ENCODE measurements at regions of chr7 and their contacts with region 1.

Region 1: DNA sequence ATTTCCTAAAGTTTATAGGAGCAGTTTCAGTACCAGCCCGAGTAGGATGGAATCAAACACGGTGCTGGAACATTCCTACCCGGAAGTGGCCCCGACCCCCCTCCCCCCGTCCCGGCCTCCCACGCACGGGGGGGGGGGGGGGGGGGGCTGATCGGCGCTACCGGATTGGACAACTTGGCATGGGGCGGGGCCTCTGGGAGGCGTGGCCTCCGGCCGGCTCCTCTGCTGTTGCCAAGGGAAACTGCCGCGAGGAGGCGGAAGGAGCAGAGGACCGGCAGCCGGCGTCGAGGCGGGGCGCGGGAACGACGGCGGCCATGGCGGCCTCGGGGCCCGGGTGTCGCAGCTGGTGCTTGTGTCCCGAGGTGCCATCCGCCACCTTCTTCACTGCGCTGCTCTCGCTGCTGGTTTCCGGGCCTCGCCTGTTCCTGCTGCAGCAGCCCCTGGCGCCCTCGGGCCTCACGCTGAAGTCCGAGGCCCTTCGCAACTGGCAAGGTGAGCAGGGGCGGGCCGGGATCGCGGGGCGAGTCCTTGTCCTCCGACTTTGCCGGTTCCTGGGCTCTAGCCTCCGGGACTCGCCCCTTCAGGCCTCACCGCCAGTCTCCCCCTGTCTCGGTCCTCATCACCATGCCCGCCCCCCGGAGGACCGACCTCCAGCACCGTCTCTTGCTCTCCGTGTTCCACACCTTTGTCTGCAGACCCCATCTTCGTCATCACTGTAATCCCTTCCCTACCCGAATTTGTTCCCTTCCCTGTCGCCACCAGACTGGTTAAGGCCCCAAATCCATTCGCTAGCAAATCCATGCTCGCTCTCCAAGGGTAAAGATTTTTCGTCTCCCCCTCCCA is at the start of gene RHBDD2:
- DNase-seq: peak; percentile 89
- H3K4me3 Mint-ChIP-seq: peak within 1 kb of the TSS; percentile 100
- H3K27ac Mint-ChIP-seq: peak within 1 kb of the TSS; percentile 99
- H3K4me1 Mint-ChIP-seq: peaks cover 39% of the 10 kb centered on the region
- H3K27me3 Mint-ChIP-seq: no peaks in the 10 kb centered on the region
- total RNA-seq, gene RHBDD2: 139 and 143 TPM in 2 replicates

Region 2: GRCh38 chr7:75776295-75776971 is 102.6 kb before region 1 on chr7:
- intact Hi-C with region 1: loop called (anchors 2 kb)
- DNase-seq: peak; percentile 50
- H3K4me3 Mint-ChIP-seq: no peak overlapping the region
- H3K27ac Mint-ChIP-seq: peak overlapping the region; percentile 78
- H3K4me1 Mint-ChIP-seq: peaks cover 36% of the 10 kb centered on the region
- H3K27me3 Mint-ChIP-seq: peaks cover 7% of the 10 kb centered on the region

Region 3: DNA sequence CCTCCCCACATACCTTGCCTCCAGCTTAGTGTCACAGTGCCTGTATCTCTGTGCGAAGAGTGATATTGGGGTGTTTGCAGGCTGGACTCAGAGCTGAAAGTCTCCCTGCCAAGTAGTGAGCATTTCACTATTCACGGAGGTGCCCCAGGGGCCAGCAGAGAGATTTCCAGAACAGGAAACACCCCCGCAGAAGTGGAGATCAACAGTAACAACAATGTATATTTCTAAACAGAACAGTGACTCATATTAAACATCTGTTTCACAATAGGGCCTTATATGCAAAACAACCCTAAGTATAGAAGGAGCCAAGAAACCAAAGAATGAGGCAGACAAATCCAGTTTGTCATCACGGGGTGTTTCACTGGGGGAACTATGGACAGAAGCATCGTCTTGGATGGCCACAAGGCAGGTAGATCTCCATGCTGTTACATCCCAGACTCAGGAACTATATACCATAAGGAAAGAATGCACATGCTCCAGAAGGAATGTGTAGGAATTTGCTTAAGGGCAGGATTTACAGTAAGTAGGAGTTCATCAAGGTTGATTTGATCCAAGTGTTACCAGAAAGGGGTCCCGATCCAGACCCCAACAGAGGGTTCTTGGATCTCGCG is 36.0 kb before region 1 on chr7:
- intact Hi-C with region 1: loop called (anchors 5 kb)
- DNase-seq: no peak
- H3K4me3 Mint-ChIP-seq: peak overlapping the region; percentile 62
- H3K27ac Mint-ChIP-seq: peak overlapping the region; percentile 97
- H3K4me1 Mint-ChIP-seq: peaks cover 14% of the 10 kb centered on the region
- H3K27me3 Mint-ChIP-seq: no peaks in the 10 kb centered on the region

Region 4: GRCh38 chr7:75866489-75867389 is 12.3 kb before region 1 on chr7:
- intact Hi-C with region 1: loop called (anchors 1 kb)
- DNase-seq: peak; percentile 33
- H3K4me3 Mint-ChIP-seq: no peak overlapping the region
- H3K27ac Mint-ChIP-seq: no peak overlapping the region
- H3K4me1 Mint-ChIP-seq: peaks cover 22% of the 10 kb centered on the region
- H3K27me3 Mint-ChIP-seq: peaks cover 3% of the 10 kb centered on the region

Region 5: GRCh38 chr7:75914730-75915585 is 36.0 kb after region 1 on chr7 and contains the start of gene POR:
- intact Hi-C with region 1: loop called (anchors 1 kb)
- DNase-seq: peak; percentile 97
- H3K4me3 Mint-ChIP-seq: peak within 1 kb of the TSS; percentile 87
- H3K27ac Mint-ChIP-seq: peak within 1 kb of the TSS; percentile 80
- H3K4me1 Mint-ChIP-seq: peaks cover 15% of the 10 kb centered on the region
- H3K27me3 Mint-ChIP-seq: no peaks in the 10 kb centered on the region
- total RNA-seq, gene POR: 105 and 106 TPM in 2 replicates

Region 6: GRCh38 chr7:76262683-76263402 is 383.9 kb after region 1 on chr7:
- intact Hi-C with region 1: no loop called
- DNase-seq: no peak
- H3K4me3 Mint-ChIP-seq: no peak overlapping the region
- H3K27ac Mint-ChIP-seq: no peak overlapping the region
- H3K4me1 Mint-ChIP-seq: peaks cover under 1% of the 10 kb centered on the region
- H3K27me3 Mint-ChIP-seq: peaks cover 20% of the 10 kb centered on the region

Measured in activated T-helper 2 cell treated with anti-CD3 and anti-CD28 coated beads, Interferon-gamma antibody, Interleukin-2, Interleukin-4, amounts not matched to agents 10 μg/mL and 5 μg/mL and 100 μg/mL, durations not matched to agents 14 hours and 24 hours and 36 hours (primary cell).